PC-9 (cell line): ENCODE measurements at regions of chr17 and their contacts with region 1.

Region 1: DNA sequence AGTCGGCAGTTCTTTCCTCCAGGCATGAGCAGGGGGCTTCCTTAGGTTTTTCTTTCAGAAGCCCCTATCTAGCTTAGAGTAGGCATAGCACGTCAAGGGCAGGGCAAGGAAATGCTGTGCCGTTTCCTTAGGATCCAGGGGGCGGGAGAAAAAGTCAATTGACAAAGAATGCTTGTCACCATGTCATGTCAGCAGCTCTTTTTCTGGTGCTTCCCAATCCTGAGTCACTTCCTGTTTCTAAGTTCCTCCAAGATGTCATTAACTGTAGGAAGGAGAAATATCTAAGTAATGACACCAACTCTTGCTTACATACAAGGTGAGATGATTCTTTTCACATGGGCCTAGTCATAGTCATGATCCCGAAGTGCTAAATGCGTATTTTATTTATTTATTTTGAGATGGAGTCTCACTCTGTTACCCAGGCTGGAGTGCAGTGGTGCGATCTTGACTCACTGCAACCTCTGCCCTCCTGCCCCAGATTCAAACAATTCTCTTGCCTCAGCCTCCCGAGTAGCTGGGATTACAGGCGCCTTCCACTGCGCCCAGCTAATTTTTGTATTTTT is 35.2 kb downstream of the GJC1 start:
- DNase-seq: peak in 1 of 2 experiments; percentile 83
- H3K4me3 ChIP-seq: no peak overlapping the region
- H3K27ac ChIP-seq: peak overlapping the region; percentile 54
- H3K4me1 ChIP-seq: peaks cover 21% of the 10 kb centered on the region
- H3K27me3 ChIP-seq: no peaks in the 10 kb centered on the region
- CTCF ChIP-seq: no peak

Region 2: DNA sequence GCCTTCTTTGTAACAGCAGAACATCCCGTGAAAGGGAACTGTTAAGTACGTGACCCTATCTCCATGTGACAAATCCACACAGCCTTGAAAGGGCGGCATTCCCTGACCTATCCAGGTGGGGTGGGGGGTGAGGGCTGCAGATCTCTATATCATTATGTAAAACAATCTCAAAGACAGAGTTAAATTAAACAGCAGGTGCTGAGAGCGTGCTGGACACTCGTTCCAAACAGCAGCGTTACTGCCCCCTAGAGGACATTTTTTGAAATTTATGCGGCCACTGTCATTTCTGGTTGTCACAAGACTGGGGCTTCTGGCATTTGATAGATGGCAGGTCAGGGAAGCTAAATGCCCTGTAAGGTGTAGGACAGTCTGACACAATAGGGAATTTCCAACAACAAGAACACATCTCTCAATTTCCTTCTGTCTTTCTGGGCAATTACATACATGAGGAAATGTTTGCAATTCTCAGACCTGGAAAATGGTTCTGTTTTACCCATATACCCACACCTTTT is 463.6 kb before region 1 on chr17:
- CTCF ChIA-PET with region 1: interaction called, 16 read pairs
- POLR2A ChIA-PET with region 1: no interaction called
- intact Hi-C with region 1: no loop called
- DNase-seq: peak; percentile 67 to 74
- H3K4me3 ChIP-seq: no peak overlapping the region
- H3K27ac ChIP-seq: no peak overlapping the region
- H3K4me1 ChIP-seq: peaks cover 11% of the 10 kb centered on the region; the same call in 1 of the 2 replicates
- H3K27me3 ChIP-seq: no peaks in the 10 kb centered on the region
- CTCF ChIP-seq: peak; percentile 90

Region 3: GRCh38 chr17:44829523-44830358 is 34.8 kb after region 1 on chr17 and contains the start of gene GJC1:
- CTCF ChIA-PET with region 1: interaction called, 4 read pairs
- POLR2A ChIA-PET with region 1: interaction called, 3 read pairs
- intact Hi-C with region 1: loop called (anchors 5 kb)
- DNase-seq: peak in 1 of 2 experiments; percentile 58
- H3K4me3 ChIP-seq: peak within 1 kb of the TSS; percentile 89
- H3K27ac ChIP-seq: no peak within 1 kb of the TSS
- H3K4me1 ChIP-seq: peaks cover 17% of the 10 kb centered on the region
- H3K27me3 ChIP-seq: no peaks in the 10 kb centered on the region
- CTCF ChIP-seq: no peak
- total RNA-seq, gene GJC1: 42.6 and 50.0 TPM in 2 replicates

Region 4: DNA sequence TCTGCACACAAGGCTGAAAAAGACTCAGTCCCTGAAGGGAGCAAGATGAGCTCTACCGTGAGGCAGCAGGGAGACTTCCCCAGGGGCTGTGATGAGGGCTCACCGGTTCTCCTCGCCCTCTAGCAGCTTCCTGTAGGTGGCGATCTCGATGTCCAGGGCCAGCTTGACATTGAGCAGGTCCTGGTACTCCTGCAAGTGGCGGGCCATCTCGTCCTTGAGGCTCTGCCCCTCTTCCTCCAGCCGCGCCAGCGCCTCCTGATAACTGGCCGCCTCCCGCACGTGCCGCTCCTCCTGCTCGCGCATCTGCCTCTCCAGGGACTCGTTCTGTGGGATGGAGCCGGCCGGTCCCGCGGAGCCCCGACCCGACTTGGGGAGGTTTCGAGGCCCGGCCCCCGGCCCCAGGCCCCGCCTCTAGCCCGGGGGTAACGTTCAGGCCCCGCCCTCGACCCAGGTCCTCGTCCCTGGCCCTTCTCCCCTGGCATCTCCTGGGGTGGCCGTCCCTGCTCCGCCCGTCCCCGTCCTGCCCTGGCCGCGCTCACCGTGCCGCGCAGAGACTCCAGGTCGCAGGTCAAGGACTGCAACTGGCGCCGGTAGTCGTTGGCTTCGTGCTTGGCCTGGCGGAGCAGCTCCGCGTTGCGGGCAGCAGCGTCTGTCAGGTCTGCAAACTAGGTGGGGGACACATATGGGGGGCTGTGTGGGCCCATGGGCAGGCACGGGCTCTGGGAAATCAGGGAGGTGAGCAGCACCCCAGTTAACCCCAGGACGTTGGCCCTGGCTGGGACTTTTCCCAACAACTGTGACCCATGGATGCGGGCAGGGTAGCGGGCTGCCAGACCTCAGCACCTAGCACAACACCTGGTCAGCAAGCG is 116.4 kb after region 1 on chr17:
- CTCF ChIA-PET with region 1: no interaction called
- POLR2A ChIA-PET with region 1: no interaction called
- intact Hi-C with region 1: no loop called
- DNase-seq: peak in 1 of 2 experiments; percentile 32
- H3K4me3 ChIP-seq: no peak overlapping the region
- H3K27ac ChIP-seq: no peak overlapping the region
- H3K4me1 ChIP-seq: peaks cover 22% of the 10 kb centered on the region
- H3K27me3 ChIP-seq: no peaks in the 10 kb centered on the region
- CTCF ChIP-seq: peak; percentile 45